ENCODE measurements at regions of chr7 and their contacts with region 1.

Region 1: DNA sequence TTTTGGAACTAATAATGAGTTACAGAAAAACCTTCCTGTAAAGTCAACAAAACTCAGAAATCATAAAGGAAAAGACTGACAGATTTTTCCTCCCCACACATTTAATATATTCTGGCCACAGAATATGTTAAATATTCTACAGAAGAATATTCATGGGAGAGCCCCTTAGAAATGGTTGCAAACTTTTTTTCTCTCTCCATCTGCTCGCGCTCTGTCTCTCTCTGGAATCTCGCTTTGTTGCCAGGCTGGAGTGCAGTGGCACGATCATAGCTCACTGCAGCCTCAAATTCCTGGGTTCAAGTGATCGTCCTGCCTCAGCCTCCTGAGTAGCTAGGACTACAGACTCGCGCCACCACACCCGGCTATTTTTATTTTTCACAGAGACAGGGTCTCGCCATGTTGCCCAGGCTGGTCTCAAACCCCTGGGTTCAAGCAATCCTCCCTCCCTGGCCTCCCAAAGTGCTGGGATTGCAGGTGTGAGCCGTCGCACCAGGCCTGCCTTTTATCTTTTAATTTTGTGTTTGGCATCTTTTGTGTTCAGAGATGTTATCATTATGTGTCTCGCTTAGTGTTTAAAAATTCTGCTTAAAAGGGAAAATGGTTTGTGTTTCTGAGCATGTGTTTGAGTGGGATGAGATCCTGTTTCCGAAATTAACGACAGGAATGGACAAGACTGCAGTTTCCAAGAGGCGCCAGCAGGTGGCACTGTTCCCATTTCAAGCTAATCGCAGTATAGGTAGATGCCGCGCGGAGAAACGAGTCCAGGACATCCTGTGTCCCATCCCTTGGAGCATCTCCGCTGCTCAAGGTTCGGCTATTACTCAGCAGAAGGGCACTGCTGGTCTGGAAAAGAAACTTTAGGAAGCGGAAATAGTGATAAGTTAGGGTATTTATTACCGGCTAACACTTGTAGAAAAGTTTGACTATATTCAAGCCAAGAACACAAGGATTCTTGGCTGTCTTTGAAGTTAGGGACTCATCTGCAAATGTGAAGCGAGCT is 23.1 kb upstream of the ST7 start:
- DNase-seq: peak; percentile 76
- ATAC-seq: peak; percentile 88
- H3K4me3 ChIP-seq: no peak overlapping the region
- H3K4me3 Mint-ChIP-seq: no peak overlapping the region
- H3K27ac ChIP-seq: no peak overlapping the region
- H3K27ac Mint-ChIP-seq: no peak overlapping the region
- H3K4me1 ChIP-seq: peaks cover 3 to 4% of the 10 kb centered on the region in 2 donors
- H3K4me1 Mint-ChIP-seq: peaks cover 6% of the 10 kb centered on the region
- H3K27me3 ChIP-seq: peaks cover 0 to 9% (median 0%) of the 10 kb centered on the region in 4 experiments
- H3K27me3 Mint-ChIP-seq: peaks cover 6% of the 10 kb centered on the region
- CTCF ChIP-seq: peak; percentile 99

Region 2: DNA sequence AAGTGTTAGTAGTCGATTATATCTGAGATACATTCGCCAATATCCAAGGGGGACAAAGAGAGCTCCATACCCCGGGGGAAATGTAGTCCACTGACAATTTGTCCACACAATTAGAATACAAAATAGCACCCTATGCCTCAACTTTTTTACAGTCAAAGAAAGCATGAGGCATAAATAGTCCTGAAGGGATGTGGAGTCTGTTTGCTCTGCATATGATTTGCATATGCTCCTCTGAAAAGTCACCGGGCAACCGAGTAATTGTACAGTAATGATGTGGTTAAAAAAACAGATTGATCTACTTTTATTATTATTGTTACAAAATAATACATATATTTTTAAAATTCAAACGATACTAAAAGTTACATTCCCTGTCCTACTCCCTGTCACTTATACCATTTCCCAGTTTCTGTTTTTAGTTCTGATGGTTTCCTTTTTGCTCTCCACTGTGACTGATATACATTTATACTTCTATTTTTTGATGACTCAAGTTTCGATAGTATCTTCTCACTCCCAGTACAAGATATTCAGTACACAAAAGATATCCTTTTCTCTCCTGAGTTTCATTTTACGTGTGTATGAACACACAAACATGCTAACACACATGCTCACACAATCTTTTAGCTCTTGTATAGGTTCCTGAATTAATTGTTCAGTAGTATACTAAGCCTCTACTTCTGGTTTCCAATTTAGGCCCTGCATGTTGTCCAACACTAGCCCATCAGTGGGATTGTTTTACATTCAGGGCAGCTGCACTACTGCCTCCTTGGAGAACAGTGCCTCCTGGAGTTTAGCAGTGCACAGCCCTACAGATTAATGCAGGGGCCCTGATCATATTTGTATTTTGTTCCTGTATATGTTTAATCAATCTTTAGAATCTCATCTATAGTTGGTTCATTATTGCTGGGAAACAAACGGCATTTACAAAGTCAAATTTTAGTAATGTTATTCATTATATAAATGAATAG is 589.0 kb before region 1 on chr7:
- CTCF ChIA-PET with region 1: no interaction called
- POLR2A ChIA-PET with region 1: no interaction called
- intact Hi-C with region 1: no loop called
- DNase-seq: no peak
- ATAC-seq: no peak
- H3K4me3 ChIP-seq: no peak overlapping the region
- H3K4me3 Mint-ChIP-seq: no peak overlapping the region
- H3K27ac ChIP-seq: no peak overlapping the region
- H3K27ac Mint-ChIP-seq: no peak overlapping the region
- H3K4me1 ChIP-seq: no peaks in the 10 kb centered on the region
- H3K4me1 Mint-ChIP-seq: no peaks in the 10 kb centered on the region
- H3K27me3 ChIP-seq: no peaks in the 10 kb centered on the region
- H3K27me3 Mint-ChIP-seq: peaks cover under 1% of the 10 kb centered on the region
- CTCF ChIP-seq: no peak

Region 3: GRCh38 chr7:116918704-116919103 is 11.5 kb before region 1 on chr7:
- CTCF ChIA-PET with region 1: interaction called, 46 read pairs
- POLR2A ChIA-PET with region 1: no interaction called
- intact Hi-C with region 1: no loop called
- DNase-seq: no peak
- ATAC-seq: no peak
- H3K4me3 ChIP-seq: no peak overlapping the region
- H3K4me3 Mint-ChIP-seq: no peak overlapping the region
- H3K27ac ChIP-seq: no peak overlapping the region
- H3K27ac Mint-ChIP-seq: no peak overlapping the region
- H3K4me1 ChIP-seq: no peaks in the 10 kb centered on the region
- H3K4me1 Mint-ChIP-seq: no peaks in the 10 kb centered on the region
- H3K27me3 ChIP-seq: no peaks in the 10 kb centered on the region
- H3K27me3 Mint-ChIP-seq: no peaks in the 10 kb centered on the region
- CTCF ChIP-seq: no peak

Region 4: GRCh38 chr7:117012696-117013095 is 82.5 kb after region 1 on chr7:
- CTCF ChIA-PET with region 1: no interaction called
- POLR2A ChIA-PET with region 1: no interaction called
- intact Hi-C with region 1: loop called (anchors 1 kb)
- DNase-seq: peak; percentile 27
- ATAC-seq: no peak
- H3K4me3 ChIP-seq: no peak overlapping the region
- H3K4me3 Mint-ChIP-seq: no peak overlapping the region
- H3K27ac ChIP-seq: no peak overlapping the region
- H3K27ac Mint-ChIP-seq: no peak overlapping the region
- H3K4me1 ChIP-seq: peaks cover 25 to 30% of the 10 kb centered on the region in 2 donors
- H3K4me1 Mint-ChIP-seq: peaks cover 47% of the 10 kb centered on the region
- H3K27me3 ChIP-seq: no peaks in the 10 kb centered on the region
- H3K27me3 Mint-ChIP-seq: no peaks in the 10 kb centered on the region
- CTCF ChIP-seq: peak; percentile 31

Region 5: DNA sequence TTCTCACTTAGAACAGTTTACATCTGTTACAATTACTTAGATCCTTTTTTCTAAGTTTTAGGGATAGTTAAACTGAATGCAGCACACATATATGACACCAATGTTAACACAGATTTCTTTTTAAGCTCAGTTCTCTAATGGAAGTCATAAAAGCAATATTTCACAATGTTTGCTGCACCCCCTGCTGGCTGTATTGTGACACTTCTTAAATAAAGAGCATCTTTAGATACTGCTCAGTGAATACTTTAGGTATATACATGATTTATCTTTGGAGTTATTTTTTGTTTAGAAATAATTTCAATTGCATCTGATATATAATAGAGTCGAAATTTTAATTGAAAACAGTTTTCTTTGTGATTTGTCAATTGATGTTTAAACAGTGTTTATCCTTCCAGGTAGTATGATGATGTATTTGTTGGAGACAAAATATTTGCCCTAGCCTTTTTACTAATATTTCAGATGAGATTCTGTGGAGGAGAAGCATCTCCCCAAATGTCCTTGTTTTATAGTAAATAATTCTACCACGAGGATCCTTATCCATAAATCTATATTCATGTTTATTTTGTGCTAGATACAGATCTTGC is 197.5 kb after region 1 on chr7:
- CTCF ChIA-PET with region 1: interaction called, 165 read pairs
- POLR2A ChIA-PET with region 1: no interaction called
- intact Hi-C with region 1: loop called (anchors 1 kb)
- DNase-seq: peak; percentile 55
- ATAC-seq: no peak
- H3K4me3 ChIP-seq: no peak overlapping the region
- H3K4me3 Mint-ChIP-seq: no peak overlapping the region
- H3K27ac ChIP-seq: no peak overlapping the region
- H3K27ac Mint-ChIP-seq: no peak overlapping the region
- H3K4me1 ChIP-seq: no peaks in the 10 kb centered on the region
- H3K4me1 Mint-ChIP-seq: no peaks in the 10 kb centered on the region
- H3K27me3 ChIP-seq: no peaks in the 10 kb centered on the region
- H3K27me3 Mint-ChIP-seq: no peaks in the 10 kb centered on the region
- CTCF ChIP-seq: peak; percentile 93

Region 6: GRCh38 chr7:118153551-118154177 is 1223.5 kb after region 1 on chr7:
- CTCF ChIA-PET with region 1: no interaction called
- POLR2A ChIA-PET with region 1: no interaction called
- intact Hi-C with region 1: loop called (anchors 2 kb)
- DNase-seq: peak; percentile 44
- ATAC-seq: no peak
- H3K4me3 ChIP-seq: no peak overlapping the region
- H3K4me3 Mint-ChIP-seq: no peak overlapping the region
- H3K27ac ChIP-seq: no peak overlapping the region
- H3K27ac Mint-ChIP-seq: no peak overlapping the region
- H3K4me1 ChIP-seq: no peaks in the 10 kb centered on the region
- H3K4me1 Mint-ChIP-seq: no peaks in the 10 kb centered on the region
- H3K27me3 ChIP-seq: peaks cover 0 to 13% (median 4%) of the 10 kb centered on the region in 4 experiments
- H3K27me3 Mint-ChIP-seq: no peaks in the 10 kb centered on the region
- CTCF ChIP-seq: peak; percentile 85